ENCODE measurements at regions of chr7 and their contacts with region 1.

Region 1: DNA sequence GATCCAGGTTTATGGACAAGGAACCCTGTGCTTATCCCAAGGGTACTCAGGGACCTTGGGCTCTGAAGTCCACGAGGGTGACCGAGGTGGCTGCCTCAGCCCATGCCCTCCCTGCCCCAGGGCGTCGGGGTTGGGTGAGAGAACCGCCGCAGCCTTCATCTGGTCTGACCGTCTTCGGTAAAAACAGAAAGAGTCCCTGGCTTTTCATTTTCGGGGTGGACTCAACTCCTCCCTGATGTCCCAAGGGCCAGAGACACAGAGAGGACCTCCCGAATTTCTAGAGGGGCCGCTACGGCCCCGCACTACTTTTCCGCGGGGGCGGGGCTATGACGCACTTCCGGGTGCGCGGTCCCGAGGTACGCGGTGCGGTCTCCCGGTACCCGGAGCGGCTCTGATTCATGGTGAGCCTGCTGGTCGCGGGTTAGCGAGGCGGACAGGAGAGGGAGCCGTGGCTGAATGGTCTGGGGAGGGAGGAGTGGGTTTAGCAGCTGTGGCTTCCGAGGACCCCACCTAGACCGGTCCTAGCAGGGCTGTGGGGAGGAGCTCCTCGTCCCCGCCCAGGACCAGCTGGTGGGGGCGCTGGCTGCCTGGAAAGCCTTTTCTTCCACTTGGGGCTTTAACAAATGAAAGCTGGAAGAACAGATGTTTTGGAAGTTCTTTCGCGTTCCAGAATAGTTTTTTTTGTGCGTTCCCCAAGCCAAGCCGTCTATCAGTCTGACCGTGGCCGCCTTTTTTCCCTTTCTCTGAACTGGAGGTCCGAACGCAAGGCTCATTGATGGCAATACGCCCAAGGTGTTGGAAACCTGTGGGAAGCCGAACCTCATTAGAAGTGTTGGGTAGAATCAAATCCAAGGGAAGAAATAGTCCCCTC is at the start of gene ZSCAN21:
- DNase-seq: peak; percentile 85 to 93 (median 89)
- ATAC-seq: peak; percentile 94 to 99 (median 98)
- H3K4me3 ChIP-seq: peak within 1 kb of the TSS; percentile 53 to 92 (median 80)
- H3K27ac ChIP-seq: peak within 1 kb of the TSS; percentile 66 to 98 (median 94)
- H3K4me1 ChIP-seq: peaks cover 0 to 19% (median 7%) of the 10 kb centered on the region in 12 donors
- H3K27me3 ChIP-seq: no peaks in the 10 kb centered on the region
- CTCF ChIP-seq: peak in 5 of 12 donors; percentile 14 to 45 (median 16)
- POLR2A ChIP-seq: peak; percentile 21 to 79
- total RNA-seq, gene ZSCAN21: 6.2 to 12.1 (median 7.2) TPM

Region 2: DNA sequence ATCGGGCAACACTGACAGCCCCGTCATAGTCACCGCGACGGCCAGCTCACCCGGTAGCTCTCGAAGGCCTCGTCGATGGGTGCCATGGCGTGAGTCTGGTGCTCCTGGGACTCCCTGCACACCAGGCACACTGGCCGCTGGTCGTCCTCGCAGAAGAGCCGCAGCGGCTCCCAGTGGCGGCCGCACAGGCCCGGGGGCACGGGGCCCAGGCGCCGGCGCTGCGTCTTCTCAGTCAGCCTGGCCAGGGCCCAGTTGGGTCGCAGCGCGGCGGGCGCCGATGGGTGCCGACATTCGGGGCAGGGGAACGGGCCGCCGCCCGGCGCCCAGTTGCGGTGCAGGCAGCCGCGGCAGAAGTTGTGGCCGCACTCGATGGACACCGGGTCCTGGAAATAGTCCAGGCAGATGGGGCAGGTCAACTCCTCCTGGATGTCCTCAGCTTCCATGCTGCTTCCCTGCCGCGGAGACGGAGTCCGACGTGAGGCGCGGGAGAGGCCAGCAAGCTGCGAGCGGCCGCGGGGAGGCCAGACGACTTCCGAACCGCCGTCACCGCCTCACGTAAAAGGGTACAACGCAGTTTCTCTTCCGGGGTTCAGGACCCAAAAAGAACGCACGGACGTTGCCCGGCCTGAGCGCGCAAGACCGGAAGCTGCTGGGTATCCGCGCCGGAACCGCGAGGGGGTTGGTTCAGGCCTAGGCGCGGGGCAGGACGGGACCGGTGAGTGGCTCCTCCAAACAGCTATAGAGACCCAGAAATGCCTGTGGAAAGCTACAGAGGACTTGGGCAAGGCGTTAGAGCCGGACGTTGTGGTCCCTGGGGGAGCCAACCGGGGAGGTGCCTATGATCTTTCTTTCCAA is 130.5 kb before region 1 on chr7 and contains the start of gene TRIM4:
- intact Hi-C with region 1: loop called in 2 of 10 experiments (anchors 10 kb)
- DNase-seq: peak; percentile 92 to 95 (median 95)
- ATAC-seq: peak; percentile 99 to 100 (median 99)
- H3K4me3 ChIP-seq: peak within 1 kb of the TSS; percentile 57 to 97 (median 81)
- H3K27ac ChIP-seq: peak within 1 kb of the TSS; percentile 51 to 97 (median 92)
- H3K4me1 ChIP-seq: peaks cover 9 to 42% (median 31%) of the 10 kb centered on the region in 12 donors
- H3K27me3 ChIP-seq: no peaks in the 10 kb centered on the region
- CTCF ChIP-seq: peak in 5 of 12 donors; percentile 13 to 45 (median 41)
- POLR2A ChIP-seq: peak in 1 of 2 donors; percentile 88
- total RNA-seq, gene TRIM4: 4.7 to 13.5 (median 7.3) TPM

Region 3: DNA sequence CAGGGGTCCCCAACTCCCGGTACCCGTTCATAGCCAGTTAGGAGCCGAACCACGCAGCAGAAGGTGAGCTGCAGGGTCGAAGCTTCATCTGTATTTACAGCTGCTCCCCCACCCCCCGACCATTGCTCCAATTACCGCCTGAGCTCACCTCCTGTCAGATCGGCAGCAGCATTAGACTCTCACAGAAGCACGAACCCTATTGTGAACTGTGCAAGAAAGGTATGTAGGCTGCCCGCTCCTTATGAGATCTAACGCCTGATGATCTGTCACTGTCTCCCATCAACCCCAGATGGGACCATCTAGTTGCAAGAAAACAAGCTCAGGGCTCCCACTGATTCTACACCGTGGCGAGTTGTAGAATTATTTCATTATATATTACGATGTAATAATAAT is 59.2 kb before region 1 on chr7:
- intact Hi-C with region 1: loop called in 8 of 10 experiments (anchors 2 to 10 kb)
- DNase-seq: no peak
- ATAC-seq: no peak
- H3K4me3 ChIP-seq: peak overlapping the region in 6 of 12 donors; percentile 6 to 40 (median 20)
- H3K27ac ChIP-seq: no peak overlapping the region
- H3K4me1 ChIP-seq: peaks cover 0 to 24% (median 3%) of the 10 kb centered on the region in 12 donors
- H3K27me3 ChIP-seq: peaks cover 0 to 4% (median 0%) of the 10 kb centered on the region in 9 donors
- CTCF ChIP-seq: no peak
- POLR2A ChIP-seq: no peak

Region 4: DNA sequence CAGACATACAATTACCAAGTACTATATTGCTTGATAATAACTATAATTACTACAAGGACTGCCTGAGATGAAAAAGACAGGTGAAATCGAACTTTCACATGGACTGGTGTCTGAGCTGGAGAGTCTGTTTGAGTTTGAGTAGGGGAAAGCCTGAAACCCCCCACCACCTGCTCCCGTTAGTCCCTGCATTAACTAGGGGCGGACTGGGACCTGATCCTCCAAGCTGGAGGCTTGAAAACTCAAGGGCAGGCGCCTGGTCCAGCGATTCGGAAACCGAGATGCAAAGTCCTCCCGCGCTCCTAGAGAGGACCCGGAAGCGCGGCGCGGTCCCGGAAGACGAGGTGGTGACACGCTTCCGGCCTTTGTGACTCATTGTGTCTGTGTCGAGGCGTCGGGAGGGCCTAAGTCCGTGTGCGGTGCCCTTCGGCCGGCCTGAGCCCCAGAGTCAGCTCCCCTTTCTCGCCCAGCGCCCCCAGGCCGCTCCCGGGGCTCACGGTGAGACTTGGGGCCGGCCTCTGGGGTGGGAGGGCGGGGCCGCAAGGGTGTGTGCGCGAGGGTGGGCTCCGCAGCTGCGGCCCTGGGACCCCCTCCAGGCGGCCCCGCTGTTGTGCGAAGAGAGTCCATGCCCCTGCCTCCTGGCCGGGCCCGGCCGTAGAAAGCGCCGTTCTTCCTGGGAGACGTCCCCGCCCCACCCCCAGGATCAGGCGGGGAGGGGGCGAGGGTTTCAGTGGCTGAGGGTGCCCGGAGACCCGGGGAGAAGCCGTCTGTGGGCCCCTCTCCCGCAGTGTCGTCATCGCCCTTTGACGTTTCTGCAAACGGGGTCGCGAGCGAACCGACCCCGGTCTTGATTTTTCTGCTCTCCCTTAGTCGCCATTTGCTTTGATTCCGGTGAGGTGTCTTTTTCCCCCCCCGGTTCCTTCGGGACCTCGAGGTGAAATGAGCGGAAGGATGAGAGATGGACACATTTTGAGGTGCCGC is 34.2 kb before region 1 on chr7 and contains the start of gene ZKSCAN1:
- intact Hi-C with region 1: loop called in 1 of 10 experiments (anchors 1 kb)
- DNase-seq: peak; percentile 87 to 93 (median 92)
- ATAC-seq: peak; percentile 98 to 99 (median 99)
- H3K4me3 ChIP-seq: peak within 1 kb of the TSS; percentile 86 to 100 (median 99)
- H3K27ac ChIP-seq: peak within 1 kb of the TSS; percentile 92 to 100 (median 97)
- H3K4me1 ChIP-seq: peaks cover 0 to 40% (median 19%) of the 10 kb centered on the region in 12 donors
- H3K27me3 ChIP-seq: no peaks in the 10 kb centered on the region
- CTCF ChIP-seq: no peak
- POLR2A ChIP-seq: peak in 1 of 2 donors; percentile 68
- total RNA-seq, gene ZKSCAN1: 19.4 to 65.5 (median 40.8) TPM

Region 5: DNA sequence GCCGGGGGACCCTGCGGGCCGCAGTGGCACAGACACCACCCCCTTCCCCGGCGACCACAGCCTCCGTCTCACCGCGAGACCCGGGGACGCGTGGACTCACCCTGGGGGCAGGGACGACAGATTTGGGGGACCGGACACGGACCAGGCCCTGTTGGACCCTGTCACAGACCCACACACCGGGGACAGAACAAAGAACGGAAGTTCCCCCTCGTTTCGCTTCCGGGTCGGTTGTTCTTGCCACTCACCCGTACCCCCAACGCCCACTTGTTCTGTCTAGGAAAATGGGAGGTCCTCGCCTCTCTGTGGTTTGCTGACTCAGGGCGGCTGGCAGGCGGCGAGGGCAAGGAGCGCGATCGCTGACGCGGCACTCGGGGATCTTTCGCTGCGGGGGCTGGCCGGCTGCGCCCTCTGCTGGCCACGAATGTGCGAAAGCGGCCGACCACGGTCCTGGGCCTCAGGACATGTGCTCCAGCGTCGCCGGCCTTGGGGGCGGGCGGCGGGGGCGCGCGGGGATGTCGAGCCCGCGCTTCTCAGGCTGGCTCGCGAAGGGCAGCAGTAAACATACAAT is 31.9 kb after region 1 on chr7 and contains the start of gene ZNF3:
- intact Hi-C with region 1: loop called in 2 of 10 experiments (anchors 1 to 2 kb)
- DNase-seq: peak; percentile 98 to 99 (median 99)
- ATAC-seq: peak; percentile 95 to 98 (median 96)
- H3K4me3 ChIP-seq: peak within 1 kb of the TSS; percentile 75 to 100 (median 88)
- H3K27ac ChIP-seq: peak within 1 kb of the TSS; percentile 77 to 95 (median 86)
- H3K4me1 ChIP-seq: peaks cover 0 to 48% (median 28%) of the 10 kb centered on the region in 12 donors
- H3K27me3 ChIP-seq: no peaks in the 10 kb centered on the region
- CTCF ChIP-seq: peak; percentile 91 to 99 (median 96)
- POLR2A ChIP-seq: peak; percentile 5 to 64
- total RNA-seq, gene ZNF3: 11.7 to 21.2 (median 15.2) TPM

Region 6: GRCh38 chr7:100221231-100221718 is 171.6 kb after region 1 on chr7:
- intact Hi-C with region 1: no loop called
- DNase-seq: peak in 1 of 5 donors; percentile 51
- ATAC-seq: peak in 1 of 4 donors; percentile 20
- H3K4me3 ChIP-seq: peak overlapping the region in 1 of 12 donors; percentile 55
- H3K27ac ChIP-seq: peak overlapping the region in 2 of 12 donors; percentile 30 to 89
- H3K4me1 ChIP-seq: peaks cover 0 to 4% (median 0%) of the 10 kb centered on the region in 12 donors
- H3K27me3 ChIP-seq: no peaks in the 10 kb centered on the region
- CTCF ChIP-seq: no peak
- POLR2A ChIP-seq: no peak

Measured in heart left ventricle (tissue), 16 donors.